Sigmoid colon (tissue), 7 donors: ENCODE measurements at regions of chr21 and their contacts with region 1.

Region 1: DNA sequence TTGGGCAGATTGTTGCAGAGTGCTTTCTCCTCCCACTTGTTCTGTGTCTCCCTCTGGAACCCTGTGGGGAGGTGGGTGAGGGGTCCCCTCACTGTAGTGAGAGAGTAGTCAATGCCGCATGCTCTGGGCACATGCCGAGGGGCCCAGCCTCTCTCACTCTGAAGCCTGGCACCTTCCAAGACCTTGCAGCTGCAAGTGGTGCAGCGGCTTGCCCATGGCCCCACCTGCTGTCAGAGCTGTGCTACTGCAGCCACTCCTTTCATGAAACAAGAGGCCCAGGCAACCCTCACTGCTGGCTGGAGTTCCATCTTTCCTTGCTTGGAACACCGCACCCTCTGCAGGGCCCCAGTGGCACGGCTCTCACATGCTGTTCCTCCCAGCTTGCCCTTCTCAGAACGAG is 58.4 kb upstream of the COL6A1 start:
- DNase-seq: peak; percentile 89
- H3K4me3 ChIP-seq: no peak overlapping the region
- H3K27ac ChIP-seq: no peak overlapping the region
- H3K4me1 ChIP-seq: peaks cover 0 to 7% (median 0%) of the 10 kb centered on the region in 4 donors
- H3K27me3 ChIP-seq: no peaks in the 10 kb centered on the region
- CTCF ChIP-seq: peak; percentile 68 to 95 (median 84)
- EP300 ChIP-seq: no peak
- POLR2A ChIP-seq: no peak

Region 2: DNA sequence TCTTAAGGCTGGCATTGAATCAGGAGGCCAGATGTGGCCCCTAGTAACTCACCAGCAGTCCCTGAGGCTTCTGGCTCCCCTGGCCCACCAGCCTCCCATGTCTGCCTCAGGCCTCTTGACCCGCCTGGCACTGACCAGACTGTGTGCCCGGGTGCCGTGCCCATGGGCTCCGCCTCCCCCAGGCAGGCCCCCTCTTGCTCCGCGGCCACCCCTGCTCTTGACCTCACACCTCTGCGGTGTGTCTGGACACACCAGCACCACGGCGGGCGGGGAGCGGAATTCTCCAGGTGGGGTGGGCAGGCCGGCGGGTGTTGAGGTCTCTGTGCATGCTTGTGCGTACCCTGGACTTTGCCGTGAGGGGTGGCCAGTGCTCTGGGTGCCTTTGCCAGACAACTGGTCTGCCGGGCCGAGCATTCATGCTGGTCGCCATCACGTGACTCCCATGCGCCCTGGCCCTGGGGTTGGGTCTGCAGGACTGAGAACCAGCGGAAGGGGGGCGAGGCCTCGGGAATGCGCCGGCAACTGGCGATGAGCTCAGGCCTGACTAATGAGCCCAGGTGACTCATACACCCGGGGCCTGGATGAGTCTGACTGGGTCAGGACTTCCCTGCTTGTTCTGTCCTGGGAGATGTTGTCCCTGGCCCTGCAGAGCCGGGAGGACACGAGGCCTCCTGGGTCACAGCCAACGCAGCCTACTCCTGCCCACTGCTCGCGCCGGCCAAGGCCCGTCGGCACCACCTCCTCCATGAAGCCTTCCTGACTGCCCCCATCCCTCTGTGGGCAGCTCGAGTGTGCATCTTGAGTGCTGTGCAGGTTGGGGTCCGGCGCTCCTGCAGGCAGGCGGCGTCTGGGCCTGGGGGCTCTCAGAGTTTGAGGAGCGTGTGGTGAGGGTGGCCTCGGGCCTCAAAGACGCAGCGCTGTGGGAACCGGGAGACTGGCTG is 495.5 kb before region 1 on chr21:
- intact Hi-C with region 1: no loop called
- DNase-seq: peak; percentile 94
- H3K4me3 ChIP-seq: no peak overlapping the region
- H3K27ac ChIP-seq: peak overlapping the region; percentile 33 to 75 (median 61)
- H3K4me1 ChIP-seq: peaks cover 0 to 43% (median 18%) of the 10 kb centered on the region in 4 donors
- H3K27me3 ChIP-seq: no peaks in the 10 kb centered on the region
- CTCF ChIP-seq: no peak
- EP300 ChIP-seq: peak in 1 of 4 donors; percentile 70
- POLR2A ChIP-seq: no peak

Region 3: DNA sequence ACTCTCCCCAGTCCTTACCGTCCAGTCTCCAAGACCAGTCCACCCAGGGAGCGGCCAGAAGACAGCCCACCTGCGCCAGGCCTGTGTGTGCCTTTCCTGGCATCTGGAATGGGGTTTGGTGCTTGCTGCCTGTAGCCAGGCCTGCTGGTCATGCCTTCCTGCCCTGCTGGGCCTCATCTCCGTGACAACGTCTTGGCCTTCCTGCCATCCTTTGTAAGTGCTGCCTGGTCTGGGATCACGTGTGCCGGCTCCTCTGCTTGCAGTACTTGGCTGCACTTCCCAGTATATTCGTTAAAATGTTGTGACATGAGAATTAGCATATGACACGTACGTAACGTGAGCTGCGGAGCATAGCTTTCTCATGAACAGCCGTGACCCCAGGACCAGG is 86.9 kb before region 1 on chr21:
- intact Hi-C with region 1: loop called (anchors 5 kb)
- DNase-seq: no peak
- H3K4me3 ChIP-seq: no peak overlapping the region
- H3K27ac ChIP-seq: peak overlapping the region in 1 of 4 donors; percentile 69
- H3K4me1 ChIP-seq: peaks cover 0 to 37% (median 8%) of the 10 kb centered on the region in 4 donors
- H3K27me3 ChIP-seq: no peaks in the 10 kb centered on the region
- CTCF ChIP-seq: no peak
- EP300 ChIP-seq: no peak
- POLR2A ChIP-seq: no peak